ENCODE measurements at regions of chr11 and their contacts with region 1.

Region 1: GRCh38 chr11:87722756-87723565 is 452.3 kb downstream of the RAB38 start:
- DNase-seq: no peak
- ATAC-seq: peak; percentile 80
- H3K4me3 ChIP-seq: no peak overlapping the region
- H3K27ac ChIP-seq: no peak overlapping the region
- H3K4me1 ChIP-seq: no peaks in the 10 kb centered on the region
- H3K27me3 ChIP-seq: no peaks in the 10 kb centered on the region
- CTCF ChIP-seq: peak; percentile 62 to 84 (median 80)
- EP300 ChIP-seq: no peak
- POLR2A ChIP-seq: no peak
- RAD21 ChIP-seq: peak; percentile 51

Region 2: GRCh38 chr11:87463486-87464102 is 259.4 kb before region 1 on chr11:
- CTCF ChIA-PET with region 1: no interaction called
- POLR2A ChIA-PET with region 1: no interaction called
- RAD21 ChIA-PET with region 1: no interaction called
- SMC1A ChIA-PET with region 1: no interaction called
- in situ Hi-C with region 1: no loop called
- intact Hi-C with region 1: loop called (anchors 10 kb)
- DNase-seq: no peak
- ATAC-seq: peak; percentile 57
- H3K4me3 ChIP-seq: no peak overlapping the region
- H3K27ac ChIP-seq: no peak overlapping the region
- H3K4me1 ChIP-seq: no peaks in the 10 kb centered on the region
- H3K27me3 ChIP-seq: no peaks in the 10 kb centered on the region
- CTCF ChIP-seq: peak; percentile 15 to 42 (median 31); a peak in 4 of 6 replicates
- EP300 ChIP-seq: no peak
- POLR2A ChIP-seq: no peak
- RAD21 ChIP-seq: peak; percentile 68

Region 3: GRCh38 chr11:87560352-87560751 is 162.6 kb before region 1 on chr11:
- CTCF ChIA-PET with region 1: no interaction called
- POLR2A ChIA-PET with region 1: no interaction called
- RAD21 ChIA-PET with region 1: no interaction called
- SMC1A ChIA-PET with region 1: no interaction called
- in situ Hi-C with region 1: no loop called
- intact Hi-C with region 1: no loop called
- DNase-seq: no peak
- ATAC-seq: no peak
- H3K4me3 ChIP-seq: no peak overlapping the region
- H3K27ac ChIP-seq: no peak overlapping the region
- H3K4me1 ChIP-seq: no peaks in the 10 kb centered on the region
- H3K27me3 ChIP-seq: no peaks in the 10 kb centered on the region
- CTCF ChIP-seq: no peak
- EP300 ChIP-seq: no peak
- POLR2A ChIP-seq: no peak
- RAD21 ChIP-seq: no peak

Region 4: GRCh38 chr11:87743007-87743406 is 20.0 kb after region 1 on chr11:
- CTCF ChIA-PET with region 1: interaction called, 12 read pairs
- POLR2A ChIA-PET with region 1: no interaction called
- RAD21 ChIA-PET with region 1: no interaction called
- SMC1A ChIA-PET with region 1: interaction called, 3 read pairs
- in situ Hi-C with region 1: no loop called
- intact Hi-C with region 1: no loop called
- DNase-seq: no peak
- ATAC-seq: no peak
- H3K4me3 ChIP-seq: no peak overlapping the region
- H3K27ac ChIP-seq: no peak overlapping the region
- H3K4me1 ChIP-seq: no peaks in the 10 kb centered on the region
- H3K27me3 ChIP-seq: no peaks in the 10 kb centered on the region
- CTCF ChIP-seq: peak in 1 of 3 experiments; percentile 7; a peak in 1 of 6 replicates
- EP300 ChIP-seq: no peak
- POLR2A ChIP-seq: no peak
- RAD21 ChIP-seq: no peak

Region 5: GRCh38 chr11:88552377-88553062 is 829.6 kb after region 1 on chr11:
- CTCF ChIA-PET with region 1: interaction called, 8 read pairs
- POLR2A ChIA-PET with region 1: no interaction called
- RAD21 ChIA-PET with region 1: no interaction called
- SMC1A ChIA-PET with region 1: no interaction called
- in situ Hi-C with region 1: no loop called
- intact Hi-C with region 1: loop called (anchors 2 kb)
- DNase-seq: peak; percentile 12
- ATAC-seq: peak; percentile 100
- H3K4me3 ChIP-seq: no peak overlapping the region
- H3K27ac ChIP-seq: no peak overlapping the region
- H3K4me1 ChIP-seq: no peaks in the 10 kb centered on the region
- H3K27me3 ChIP-seq: peaks cover 0 to 10% of the 10 kb centered on the region in 2 experiments; a peak in 2 of 4 replicates
- CTCF ChIP-seq: peak; percentile 84 to 93 (median 91)
- EP300 ChIP-seq: no peak
- POLR2A ChIP-seq: no peak
- RAD21 ChIP-seq: peak; percentile 86

Region 6: DNA sequence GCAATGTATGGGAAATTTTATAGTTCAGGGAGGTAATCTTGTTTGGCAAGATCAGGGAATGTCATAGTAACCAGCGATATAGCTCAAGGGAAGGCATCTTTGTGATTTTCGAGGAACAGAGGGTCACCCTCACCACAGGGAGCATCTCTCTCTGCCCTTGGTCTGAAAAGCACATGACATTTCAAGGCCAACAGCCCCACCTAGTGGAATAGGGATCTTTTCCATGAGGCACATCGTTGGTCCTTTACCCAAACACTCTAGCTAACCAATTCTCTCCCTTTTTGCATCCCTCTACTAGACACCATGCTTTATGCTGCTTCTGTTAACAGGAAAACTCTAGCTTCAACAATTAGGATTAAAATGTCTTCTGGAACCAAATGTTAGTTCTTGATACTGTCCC is 1163.8 kb after region 1 on chr11:
- CTCF ChIA-PET with region 1: no interaction called
- POLR2A ChIA-PET with region 1: no interaction called
- RAD21 ChIA-PET with region 1: interaction called, 3 read pairs
- SMC1A ChIA-PET with region 1: interaction called, 3 read pairs
- in situ Hi-C with region 1: no loop called
- intact Hi-C with region 1: loop called (anchors 10 kb)
- DNase-seq: peak; percentile 11
- ATAC-seq: peak; percentile 98
- H3K4me3 ChIP-seq: no peak overlapping the region
- H3K27ac ChIP-seq: no peak overlapping the region
- H3K4me1 ChIP-seq: no peaks in the 10 kb centered on the region
- H3K27me3 ChIP-seq: no peaks in the 10 kb centered on the region
- CTCF ChIP-seq: peak; percentile 62 to 64 (median 62); a peak in 5 of 6 replicates
- EP300 ChIP-seq: no peak
- POLR2A ChIP-seq: no peak
- RAD21 ChIP-seq: peak; percentile 80